Psoas muscle (tissue), 8 donors: ENCODE measurements at regions of chr4 and their contacts with region 1.

Region 1: GRCh38 chr4:70725633-70726032 is 3.9 kb downstream of the RUFY3 start:
- DNase-seq: no peak
- ATAC-seq: no peak
- H3K4me3 ChIP-seq: no peak overlapping the region
- H3K27ac ChIP-seq: no peak overlapping the region
- H3K4me1 ChIP-seq: no peaks in the 10 kb centered on the region
- H3K27me3 ChIP-seq: no peaks in the 10 kb centered on the region
- CTCF ChIP-seq: no peak

Region 2: DNA sequence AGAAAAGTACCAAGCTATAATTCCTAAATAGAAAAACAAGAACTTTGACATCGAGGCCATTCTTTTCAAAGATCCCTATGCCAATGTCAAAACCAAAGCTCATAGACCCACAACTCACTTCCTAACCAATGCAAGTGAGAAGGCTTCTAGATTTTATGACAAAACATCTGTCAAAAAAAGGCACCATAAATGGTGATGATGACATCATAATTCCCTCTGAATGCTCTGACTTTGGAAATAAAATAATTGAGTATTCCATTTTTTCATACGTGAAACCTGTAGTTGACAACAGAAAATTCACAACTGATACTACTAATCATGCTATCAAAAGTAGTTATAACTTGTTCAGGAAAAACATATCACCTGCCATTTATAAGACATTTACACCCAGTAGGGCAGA is 399.6 kb before region 1 on chr4:
- intact Hi-C with region 1: no loop called
- DNase-seq: no peak
- ATAC-seq: no peak
- H3K4me3 ChIP-seq: no peak overlapping the region
- H3K27ac ChIP-seq: no peak overlapping the region
- H3K4me1 ChIP-seq: no peaks in the 10 kb centered on the region
- H3K27me3 ChIP-seq: no peaks in the 10 kb centered on the region
- CTCF ChIP-seq: no peak

Region 3: DNA sequence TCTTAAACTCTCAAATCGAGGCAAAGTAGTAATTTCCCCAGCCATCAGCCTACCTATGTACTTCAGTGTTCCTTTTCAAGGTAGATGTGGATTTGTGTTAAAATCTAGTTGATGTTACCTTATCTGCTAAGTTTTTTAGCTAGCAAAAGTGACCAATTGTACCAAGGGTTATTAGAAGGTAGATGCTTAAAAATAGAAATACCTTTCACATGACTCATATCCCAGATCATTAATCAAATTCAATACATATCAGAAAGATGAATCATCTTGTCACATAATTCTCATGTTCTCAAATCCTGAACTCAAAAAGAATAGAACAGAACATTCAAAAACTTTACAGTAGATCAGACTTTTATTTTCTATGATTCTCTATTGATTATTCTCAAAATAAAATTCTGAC is 93.6 kb before region 1 on chr4:
- intact Hi-C with region 1: no loop called
- DNase-seq: no peak
- ATAC-seq: no peak
- H3K4me3 ChIP-seq: no peak overlapping the region
- H3K27ac ChIP-seq: no peak overlapping the region
- H3K4me1 ChIP-seq: no peaks in the 10 kb centered on the region
- H3K27me3 ChIP-seq: no peaks in the 10 kb centered on the region
- CTCF ChIP-seq: no peak

Region 4: GRCh38 chr4:70713453-70714078 is 12.1 kb before region 1 on chr4:
- intact Hi-C with region 1: loop called in 1 of 2 experiments (anchors 2 kb)
- DNase-seq: no peak
- ATAC-seq: peak in 1 of 4 donors; percentile 19
- H3K4me3 ChIP-seq: peak overlapping the region; percentile 8
- H3K27ac ChIP-seq: peak overlapping the region; percentile 42
- H3K4me1 ChIP-seq: peaks cover 34% of the 10 kb centered on the region
- H3K27me3 ChIP-seq: no peaks in the 10 kb centered on the region
- CTCF ChIP-seq: no peak

Region 5: DNA sequence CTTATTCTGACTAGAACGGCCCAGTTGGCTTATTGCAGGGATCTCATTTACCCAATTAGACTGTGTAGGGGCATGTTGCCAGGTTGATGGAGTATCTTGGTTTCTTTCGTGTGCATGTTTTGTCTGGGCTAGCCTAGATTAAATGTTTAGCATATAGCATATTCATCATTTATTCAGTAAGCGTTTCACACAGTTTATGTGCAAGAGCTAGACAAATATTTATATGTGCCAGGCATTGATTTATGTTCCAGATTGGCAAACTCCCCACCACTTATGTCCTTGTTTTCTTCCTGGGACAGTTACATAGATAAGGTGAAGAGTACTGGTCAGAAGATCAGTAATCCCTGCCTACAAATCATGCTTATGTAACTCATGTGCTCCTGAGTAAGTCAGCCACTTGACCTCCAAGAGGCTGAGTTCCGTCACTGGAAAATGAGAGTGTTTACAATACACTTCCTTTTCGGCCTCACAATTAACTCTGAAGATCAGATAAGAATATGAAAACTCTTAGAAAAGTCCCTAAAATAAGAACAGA is 53.3 kb after region 1 on chr4:
- intact Hi-C with region 1: no loop called
- DNase-seq: no peak
- ATAC-seq: peak in 1 of 4 donors; percentile 32
- H3K4me3 ChIP-seq: no peak overlapping the region
- H3K27ac ChIP-seq: no peak overlapping the region
- H3K4me1 ChIP-seq: no peaks in the 10 kb centered on the region
- H3K27me3 ChIP-seq: no peaks in the 10 kb centered on the region
- CTCF ChIP-seq: no peak

Region 6: GRCh38 chr4:71290074-71290473 is 564.4 kb after region 1 on chr4:
- intact Hi-C with region 1: no loop called
- DNase-seq: no peak
- ATAC-seq: peak; percentile 92 to 99 (median 96)
- H3K4me3 ChIP-seq: no peak overlapping the region
- H3K27ac ChIP-seq: no peak overlapping the region
- H3K4me1 ChIP-seq: peaks cover 26% of the 10 kb centered on the region
- H3K27me3 ChIP-seq: no peaks in the 10 kb centered on the region
- CTCF ChIP-seq: no peak